OCI-LY7 (cell line): ENCODE measurements at regions of chr22 and their contacts with region 1.

Region 1: GRCh38 chr22:35648066-35649025 is at the start of gene APOL6:
- DNase-seq: peak; percentile 81
- H3K4me3 ChIP-seq: peak within 1 kb of the TSS; percentile 76
- H3K27ac ChIP-seq: peak within 1 kb of the TSS; percentile 90
- H3K4me1 ChIP-seq: peaks cover 51% of the 10 kb centered on the region
- CTCF ChIP-seq: no peak
- total RNA-seq, gene APOL6: 27.8 and 28.8 TPM in 2 replicates

Region 2: GRCh38 chr22:35690001-35690400 is 41.7 kb after region 1 on chr22:
- CTCF ChIA-PET with region 1: no interaction called
- POLR2A ChIA-PET with region 1: no interaction called
- intact Hi-C with region 1: no loop called
- DNase-seq: no peak
- H3K4me3 ChIP-seq: no peak overlapping the region
- H3K27ac ChIP-seq: no peak overlapping the region
- H3K4me1 ChIP-seq: peaks cover 24% of the 10 kb centered on the region
- CTCF ChIP-seq: no peak

Region 3: GRCh38 chr22:35728639-35729308 is 80.4 kb after region 1 on chr22:
- CTCF ChIA-PET with region 1: no interaction called
- POLR2A ChIA-PET with region 1: interaction called, 6 read pairs
- intact Hi-C with region 1: loop called (anchors 5 kb)
- DNase-seq: peak; percentile 91
- H3K4me3 ChIP-seq: peak overlapping the region; percentile 67
- H3K27ac ChIP-seq: peak overlapping the region; percentile 91
- H3K4me1 ChIP-seq: peaks cover 68% of the 10 kb centered on the region
- CTCF ChIP-seq: peak; percentile 42